Activated CD8-positive, alpha-beta T cell treated with anti-CD3 and anti-CD28 coated beads, Interleukin-2, amount 10 ng/mL, durations not matched to agents 7 days and 5 days (primary cell): ENCODE measurements at regions of chr13 and their contacts with region 1.

Region 1: GRCh38 chr13:102870677-102871415 is 25.0 kb downstream of the ERCC5 start:
- DNase-seq: peak; percentile 65
- ATAC-seq: peak; percentile 82
- H3K4me3 Mint-ChIP-seq: no peak overlapping the region
- H3K27ac Mint-ChIP-seq: no peak overlapping the region
- H3K4me1 Mint-ChIP-seq: peaks cover 23% of the 10 kb centered on the region
- H3K27me3 Mint-ChIP-seq: no peaks in the 10 kb centered on the region

Region 2: GRCh38 chr13:102854675-102855074 is 16.2 kb before region 1 on chr13:
- CTCF ChIA-PET with region 1: interaction called, 15 read pairs
- POLR2A ChIA-PET with region 1: no interaction called
- DNase-seq: no peak
- ATAC-seq: no peak
- H3K4me3 Mint-ChIP-seq: no peak overlapping the region
- H3K27ac Mint-ChIP-seq: peak overlapping the region; percentile 46
- H3K4me1 Mint-ChIP-seq: peaks cover 19% of the 10 kb centered on the region
- H3K27me3 Mint-ChIP-seq: no peaks in the 10 kb centered on the region

Region 3: DNA sequence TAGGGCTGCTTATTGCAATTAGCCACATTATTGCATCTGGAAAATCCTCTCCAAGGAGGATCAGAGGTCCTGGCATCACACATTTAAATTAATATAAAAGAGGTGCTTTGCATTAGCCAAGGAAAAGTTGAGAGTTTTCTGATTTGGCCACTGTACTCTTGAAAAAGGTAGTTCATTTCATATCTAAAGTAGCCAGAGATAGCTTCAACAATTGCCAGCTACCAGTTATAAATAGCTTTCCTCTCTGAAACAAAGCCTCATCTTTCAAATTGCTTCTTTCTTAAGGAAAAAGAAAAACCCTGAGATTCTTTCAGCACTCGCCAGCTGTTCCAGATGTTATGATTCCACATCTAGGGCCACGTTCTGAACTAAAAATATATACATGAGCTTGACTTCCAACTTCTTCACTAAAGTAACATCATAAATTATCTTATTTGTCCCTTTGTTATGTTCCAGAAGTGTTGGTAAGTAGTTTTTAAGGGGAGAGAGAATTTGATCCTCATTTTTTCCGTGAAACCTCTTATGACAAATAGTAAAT is 44.6 kb after region 1 on chr13:
- CTCF ChIA-PET with region 1: interaction called, 12 read pairs
- POLR2A ChIA-PET with region 1: no interaction called
- DNase-seq: no peak
- ATAC-seq: no peak
- H3K4me3 Mint-ChIP-seq: no peak overlapping the region
- H3K27ac Mint-ChIP-seq: no peak overlapping the region
- H3K4me1 Mint-ChIP-seq: no peaks in the 10 kb centered on the region
- H3K27me3 Mint-ChIP-seq: peaks cover 15% of the 10 kb centered on the region

Region 4: GRCh38 chr13:103351035-103351828 is 480.4 kb after region 1 on chr13:
- CTCF ChIA-PET with region 1: no interaction called
- POLR2A ChIA-PET with region 1: no interaction called
- DNase-seq: no peak
- ATAC-seq: no peak
- H3K4me3 Mint-ChIP-seq: no peak overlapping the region
- H3K27ac Mint-ChIP-seq: no peak overlapping the region
- H3K4me1 Mint-ChIP-seq: no peaks in the 10 kb centered on the region
- H3K27me3 Mint-ChIP-seq: no peaks in the 10 kb centered on the region